GM12878 (cell line): ENCODE measurements at regions of chr3 and their contacts with region 1.

Region 1: GRCh38 chr3:71583566-71584449 is at the start of gene FOXP1:
- DNase-seq: no peak
- ATAC-seq: peak; percentile 67
- H3K4me3 ChIP-seq: peak within 1 kb of the TSS; percentile 67
- H3K27ac ChIP-seq: no peak within 1 kb of the TSS
- H3K4me1 ChIP-seq: peaks cover 9% of the 10 kb centered on the region
- H3K27me3 ChIP-seq: peaks cover 12 to 35% of the 10 kb centered on the region in 2 experiments
- CTCF ChIP-seq: no peak
- EP300 ChIP-seq: no peak
- POLR2A ChIP-seq: no peak
- RAD21 ChIP-seq: no peak
- polyA plus RNA-seq, gene FOXP1: 0.13 to 0.14 TPM

Region 2: DNA sequence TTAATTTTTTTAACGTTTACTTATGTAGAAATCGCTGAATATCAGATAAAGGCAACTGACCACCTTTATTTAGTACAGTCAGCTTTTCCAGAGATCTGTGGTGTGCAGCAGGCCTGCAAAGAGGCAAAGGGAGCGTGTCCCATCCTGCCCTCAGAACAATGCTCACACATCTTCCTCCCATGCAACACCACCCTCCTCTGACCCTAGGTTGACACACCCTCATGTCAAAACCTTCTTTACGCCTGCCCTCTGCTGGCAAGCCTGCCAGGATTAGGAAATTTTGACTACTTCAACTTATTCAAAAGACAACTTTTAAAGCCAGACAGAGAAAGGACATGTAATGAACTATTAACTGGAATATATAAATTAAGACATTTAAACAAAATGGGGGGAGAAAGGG is 514.0 kb before region 1 on chr3:
- CTCF ChIA-PET with region 1: interaction called, 4 read pairs
- POLR2A ChIA-PET with region 1: no interaction called
- RAD21 ChIA-PET with region 1: no interaction called
- SMC1A ChIA-PET with region 1: no interaction called
- in situ Hi-C with region 1: no loop called
- intact Hi-C with region 1: loop called (anchors 5 kb)
- DNase-seq: no peak
- ATAC-seq: peak; percentile 77
- H3K4me3 ChIP-seq: no peak overlapping the region
- H3K27ac ChIP-seq: no peak overlapping the region
- H3K4me1 ChIP-seq: no peaks in the 10 kb centered on the region
- H3K27me3 ChIP-seq: peaks cover 4 to 9% of the 10 kb centered on the region in 2 experiments; a peak in 3 of 4 replicates
- CTCF ChIP-seq: peak; percentile 41 to 53 (median 52); a peak in 5 of 6 replicates
- EP300 ChIP-seq: no peak
- POLR2A ChIP-seq: no peak
- RAD21 ChIP-seq: peak; percentile 71

Region 3: DNA sequence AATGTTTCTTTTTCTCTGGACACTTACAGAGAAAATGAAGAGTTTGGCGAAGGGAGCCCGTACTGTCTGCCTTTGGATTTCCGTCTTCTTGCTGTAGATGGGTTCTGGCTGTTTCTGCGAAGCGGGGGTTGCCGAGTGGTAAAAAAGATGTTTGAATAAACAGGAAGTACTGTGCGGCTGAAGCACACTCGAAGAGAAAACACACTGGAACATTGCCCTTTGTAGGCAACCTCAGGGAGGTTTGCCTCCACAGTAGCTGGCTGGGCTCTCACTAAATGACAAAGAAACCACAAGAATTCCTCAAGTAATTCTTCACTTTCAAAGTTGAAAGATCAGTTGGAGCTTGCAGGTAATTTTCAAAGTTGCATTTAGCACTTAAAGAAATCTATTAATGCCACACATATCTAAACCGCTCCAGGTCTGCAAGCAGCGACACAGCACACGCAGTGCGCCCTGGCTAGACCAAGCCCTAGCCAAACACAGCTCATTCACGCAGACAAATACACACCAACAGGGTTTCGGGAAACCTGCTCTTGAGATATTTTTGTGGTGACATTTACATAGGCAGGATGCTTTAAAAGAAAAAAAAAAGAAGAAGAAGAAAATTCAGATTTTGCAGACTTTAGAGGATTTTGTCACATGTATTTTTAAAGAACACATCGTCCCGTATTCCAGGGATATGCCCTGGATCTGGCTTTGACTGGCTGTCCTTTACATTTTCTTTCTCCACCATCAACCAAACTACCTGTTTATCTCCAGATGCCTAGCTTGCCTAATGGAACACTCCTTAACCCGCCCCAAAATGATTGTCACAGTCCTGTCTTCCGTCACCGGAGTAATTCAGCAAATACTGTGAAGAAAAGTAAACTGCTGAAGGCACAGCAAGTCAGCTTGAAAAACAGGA is 453.1 kb before region 1 on chr3:
- CTCF ChIA-PET with region 1: no interaction called
- POLR2A ChIA-PET with region 1: no interaction called
- RAD21 ChIA-PET with region 1: no interaction called
- SMC1A ChIA-PET with region 1: no interaction called
- in situ Hi-C with region 1: no loop called
- intact Hi-C with region 1: loop called (anchors 10 kb)
- DNase-seq: no peak
- ATAC-seq: peak; percentile 37
- H3K4me3 ChIP-seq: no peak overlapping the region
- H3K27ac ChIP-seq: no peak overlapping the region
- H3K4me1 ChIP-seq: peaks cover 4% of the 10 kb centered on the region
- H3K27me3 ChIP-seq: peaks cover 5 to 19% of the 10 kb centered on the region in 2 experiments; a peak in 2 of 4 replicates
- CTCF ChIP-seq: no peak
- EP300 ChIP-seq: no peak
- POLR2A ChIP-seq: no peak
- RAD21 ChIP-seq: no peak